ENCODE measurements at regions of chr13 and their contacts with region 1.

Region 1: GRCh38 chr13:51286135-51287002 is 53.1 kb upstream of the SERPINE3 start:
- DNase-seq: peak; percentile 87
- H3K4me3 Mint-ChIP-seq: no peak overlapping the region
- H3K27ac Mint-ChIP-seq: no peak overlapping the region
- H3K4me1 Mint-ChIP-seq: no peaks in the 10 kb centered on the region
- H3K27me3 Mint-ChIP-seq: no peaks in the 10 kb centered on the region

Region 2: DNA sequence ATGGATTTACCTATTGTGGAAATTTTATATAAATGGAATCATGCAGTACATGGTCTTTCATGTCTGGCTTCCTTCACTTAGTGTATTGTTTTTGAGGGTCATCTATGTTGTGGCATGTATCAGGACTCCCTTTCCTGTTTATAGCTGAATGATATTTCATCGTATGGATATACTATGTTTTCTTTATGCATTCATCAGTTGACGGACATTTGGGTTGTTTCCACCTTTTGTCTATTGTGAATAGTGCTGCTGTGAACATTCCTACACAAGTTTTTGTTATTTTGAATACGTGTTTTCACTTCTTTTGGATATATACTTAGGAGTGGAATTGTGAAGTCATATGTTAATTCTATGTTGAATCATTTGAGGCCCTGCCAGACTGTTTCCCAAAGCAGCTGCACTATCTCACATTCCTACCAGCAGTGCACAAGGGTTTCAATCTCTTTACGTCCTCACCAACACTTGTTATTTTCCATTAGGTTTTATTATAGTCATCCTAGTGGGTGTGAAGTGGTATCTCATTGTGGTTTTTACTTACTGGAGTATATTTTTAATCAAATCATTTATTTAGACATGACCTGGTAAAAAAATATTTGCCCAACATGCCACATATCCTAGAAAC is 705.6 kb before region 1 on chr13:
- CTCF ChIA-PET with region 1: no interaction called
- intact Hi-C with region 1: no loop called
- DNase-seq: no peak
- H3K4me3 Mint-ChIP-seq: no peak overlapping the region
- H3K27ac Mint-ChIP-seq: no peak overlapping the region
- H3K4me1 Mint-ChIP-seq: no peaks in the 10 kb centered on the region
- H3K27me3 Mint-ChIP-seq: peaks cover 3% of the 10 kb centered on the region

Region 3: GRCh38 chr13:50843257-50844083 is 442.9 kb before region 1 on chr13 and contains the start of gene DLEU7:
- CTCF ChIA-PET with region 1: no interaction called
- intact Hi-C with region 1: no loop called
- DNase-seq: no peak
- H3K4me3 Mint-ChIP-seq: no peak within 1 kb of the TSS
- H3K27ac Mint-ChIP-seq: no peak within 1 kb of the TSS
- H3K4me1 Mint-ChIP-seq: peaks cover 16% of the 10 kb centered on the region
- H3K27me3 Mint-ChIP-seq: peaks cover 17% of the 10 kb centered on the region
- total RNA-seq, gene DLEU7: not detected

Region 4: DNA sequence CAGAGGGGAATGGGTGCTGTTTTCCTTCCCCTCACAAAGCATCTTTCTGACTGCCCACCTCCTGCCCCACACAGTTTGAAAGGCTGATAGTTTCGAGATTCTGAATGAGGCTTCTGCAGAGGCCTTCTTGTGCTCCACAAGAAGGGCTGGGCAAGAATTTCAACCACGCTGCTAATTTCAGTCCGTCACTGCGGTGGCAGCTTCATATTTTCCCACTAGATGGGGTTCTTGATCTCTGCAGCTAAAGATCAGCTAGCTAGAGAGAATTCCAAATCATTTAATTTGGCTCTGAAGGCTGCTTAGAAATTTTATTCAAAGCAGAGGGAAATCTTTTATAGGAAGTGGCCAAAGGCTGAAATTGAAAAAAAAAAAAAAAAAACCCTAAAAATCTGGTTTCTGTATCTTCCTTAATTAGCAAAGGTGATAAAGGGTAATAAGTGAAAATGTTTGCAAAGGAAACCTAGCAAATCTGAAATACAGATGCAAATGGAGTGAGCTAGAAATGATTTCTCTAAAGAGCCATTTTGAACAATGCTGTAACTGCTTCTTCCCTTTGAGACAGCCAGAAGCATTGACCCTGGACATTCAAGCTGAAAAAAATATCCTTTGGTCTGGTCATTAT is 137.3 kb before region 1 on chr13:
- CTCF ChIA-PET with region 1: interaction called, 10 read pairs
- intact Hi-C with region 1: loop called (anchors 1 kb)
- DNase-seq: no peak
- H3K4me3 Mint-ChIP-seq: no peak overlapping the region
- H3K27ac Mint-ChIP-seq: no peak overlapping the region
- H3K4me1 Mint-ChIP-seq: peaks cover 2% of the 10 kb centered on the region
- H3K27me3 Mint-ChIP-seq: peaks cover 2% of the 10 kb centered on the region

Region 5: DNA sequence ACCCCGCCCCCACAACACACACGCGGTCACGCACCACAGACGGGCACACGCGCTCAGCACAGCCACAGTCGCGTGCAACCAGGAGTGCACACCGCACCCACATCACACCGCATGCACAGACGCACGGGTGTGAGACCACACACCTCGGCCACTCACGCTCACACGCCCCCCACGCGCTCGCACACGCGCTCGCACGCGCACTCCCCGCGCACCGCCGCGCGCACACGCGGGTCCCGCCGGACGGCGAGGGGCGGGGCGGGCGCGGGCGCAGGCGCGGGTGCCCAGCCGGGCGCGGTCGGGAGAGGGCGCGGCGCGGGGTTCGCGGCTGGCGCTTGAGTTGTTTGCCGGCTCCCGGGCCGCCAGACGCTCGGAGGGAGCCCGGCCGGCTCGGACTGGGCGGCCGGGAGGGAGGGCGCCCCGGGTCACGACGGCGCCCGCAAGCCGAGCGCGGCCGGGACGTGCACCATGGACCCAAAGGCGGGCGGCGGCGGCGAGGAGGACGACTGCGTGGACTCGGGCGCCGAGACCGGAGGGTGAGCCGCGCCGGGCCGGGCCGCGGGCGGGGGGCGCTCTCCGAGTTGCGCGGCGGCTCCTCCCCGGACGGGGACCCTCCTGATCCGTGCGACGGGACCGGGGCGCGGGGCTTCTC is 64.2 kb before region 1 on chr13 and contains the start of gene FAM124A:
- CTCF ChIA-PET with region 1: interaction called, 18 read pairs
- intact Hi-C with region 1: loop called (anchors 1 kb)
- DNase-seq: peak; percentile 49
- H3K4me3 Mint-ChIP-seq: peak within 1 kb of the TSS; percentile 73
- H3K27ac Mint-ChIP-seq: no peak within 1 kb of the TSS
- H3K4me1 Mint-ChIP-seq: no peaks in the 10 kb centered on the region
- H3K27me3 Mint-ChIP-seq: peaks cover 39% of the 10 kb centered on the region
- total RNA-seq, gene FAM124A: not detected

Region 6: GRCh38 chr13:51262501-51263211 is 23.7 kb before region 1 on chr13:
- CTCF ChIA-PET with region 1: interaction called, 17 read pairs
- intact Hi-C with region 1: no loop called
- DNase-seq: no peak
- H3K4me3 Mint-ChIP-seq: no peak overlapping the region
- H3K27ac Mint-ChIP-seq: no peak overlapping the region
- H3K4me1 Mint-ChIP-seq: no peaks in the 10 kb centered on the region
- H3K27me3 Mint-ChIP-seq: no peaks in the 10 kb centered on the region

Region 7: GRCh38 chr13:51297556-51297955 is 11.2 kb after region 1 on chr13:
- CTCF ChIA-PET with region 1: interaction called, 52 read pairs
- intact Hi-C with region 1: no loop called
- DNase-seq: no peak
- H3K4me3 Mint-ChIP-seq: no peak overlapping the region
- H3K27ac Mint-ChIP-seq: no peak overlapping the region
- H3K4me1 Mint-ChIP-seq: no peaks in the 10 kb centered on the region
- H3K27me3 Mint-ChIP-seq: no peaks in the 10 kb centered on the region

Region 8: GRCh38 chr13:52061587-52061986 is 775.2 kb after region 1 on chr13:
- CTCF ChIA-PET with region 1: no interaction called
- intact Hi-C with region 1: no loop called
- DNase-seq: no peak
- H3K4me3 Mint-ChIP-seq: no peak overlapping the region
- H3K27ac Mint-ChIP-seq: no peak overlapping the region
- H3K4me1 Mint-ChIP-seq: no peaks in the 10 kb centered on the region
- H3K27me3 Mint-ChIP-seq: no peaks in the 10 kb centered on the region